Endothelial cell of umbilical vein (primary cell): ENCODE measurements at regions of chr4 and their contacts with region 1.

Region 1: GRCh38 chr4:96240041-96240440 is 400.1 kb downstream of the PDHA2 start:
- DNase-seq: no peak
- H3K4me3 ChIP-seq: no peak overlapping the region
- H3K27ac ChIP-seq: no peak overlapping the region
- H3K4me1 ChIP-seq: no peaks in the 10 kb centered on the region
- H3K27me3 ChIP-seq: no peaks in the 10 kb centered on the region
- CTCF ChIP-seq: no peak
- POLR2A ChIP-seq: no peak

Region 2: DNA sequence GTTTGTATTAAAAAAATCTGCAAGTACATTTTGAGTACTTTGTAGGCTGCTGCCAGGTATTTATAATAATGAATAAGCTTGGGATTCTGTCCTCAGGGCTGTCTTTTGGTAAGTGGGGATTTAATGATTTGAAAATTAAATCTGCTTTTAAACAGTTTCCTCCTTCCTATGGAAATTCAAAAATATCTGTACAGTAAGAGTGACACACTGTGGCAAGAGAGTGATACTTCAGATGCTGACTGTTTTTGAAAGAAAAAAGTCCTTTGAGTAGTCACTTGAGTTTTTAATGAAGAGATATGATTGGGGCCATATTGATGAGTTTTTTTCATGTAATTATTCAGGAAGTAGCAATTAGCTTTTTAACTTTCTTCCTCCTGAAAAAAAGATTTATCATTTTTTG is 1983.2 kb before region 1 on chr4:
- CTCF ChIA-PET with region 1: no interaction called
- POLR2A ChIA-PET with region 1: no interaction called
- dilution Hi-C with region 1: no loop called
- intact Hi-C with region 1: no loop called
- DNase-seq: peak; percentile 17
- H3K4me3 ChIP-seq: no peak overlapping the region
- H3K27ac ChIP-seq: no peak overlapping the region
- H3K4me1 ChIP-seq: peaks cover under 1% of the 10 kb centered on the region
- H3K27me3 ChIP-seq: no peaks in the 10 kb centered on the region
- CTCF ChIP-seq: no peak
- POLR2A ChIP-seq: no peak

Region 3: GRCh38 chr4:96375367-96375766 is 135.3 kb after region 1 on chr4:
- CTCF ChIA-PET with region 1: no interaction called
- POLR2A ChIA-PET with region 1: no interaction called
- dilution Hi-C with region 1: no loop called
- intact Hi-C with region 1: no loop called
- DNase-seq: no peak
- H3K4me3 ChIP-seq: no peak overlapping the region
- H3K27ac ChIP-seq: no peak overlapping the region
- H3K4me1 ChIP-seq: no peaks in the 10 kb centered on the region
- H3K27me3 ChIP-seq: no peaks in the 10 kb centered on the region
- CTCF ChIP-seq: no peak
- POLR2A ChIP-seq: no peak

Region 4: DNA sequence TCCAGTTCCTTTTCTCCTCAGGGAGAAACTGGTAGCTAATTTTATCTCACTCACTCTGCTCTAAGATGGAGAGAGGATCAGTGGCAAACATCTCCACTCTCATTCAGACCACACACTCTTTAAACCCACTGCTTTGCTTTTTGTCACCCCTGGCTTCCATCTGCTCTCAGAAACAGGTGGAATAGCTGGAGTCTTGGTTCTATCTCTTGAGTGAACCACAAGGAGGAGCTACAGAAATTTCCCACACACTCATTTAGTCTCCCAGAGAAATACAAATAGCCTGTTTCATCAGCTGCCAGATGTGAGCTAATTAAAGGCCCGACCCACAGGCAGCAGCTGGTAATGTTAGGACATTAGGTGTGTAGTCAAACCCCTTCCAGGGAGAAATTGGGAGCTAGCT is 1806.6 kb after region 1 on chr4:
- CTCF ChIA-PET with region 1: no interaction called
- POLR2A ChIA-PET with region 1: no interaction called
- dilution Hi-C with region 1: no loop called
- intact Hi-C with region 1: loop called (anchors 5 kb)
- DNase-seq: no peak
- H3K4me3 ChIP-seq: no peak overlapping the region
- H3K27ac ChIP-seq: no peak overlapping the region
- H3K4me1 ChIP-seq: no peaks in the 10 kb centered on the region
- H3K27me3 ChIP-seq: no peaks in the 10 kb centered on the region
- CTCF ChIP-seq: no peak
- POLR2A ChIP-seq: no peak